ENCODE measurements at regions of chr20 and their contacts with region 1.

Region 1: DNA sequence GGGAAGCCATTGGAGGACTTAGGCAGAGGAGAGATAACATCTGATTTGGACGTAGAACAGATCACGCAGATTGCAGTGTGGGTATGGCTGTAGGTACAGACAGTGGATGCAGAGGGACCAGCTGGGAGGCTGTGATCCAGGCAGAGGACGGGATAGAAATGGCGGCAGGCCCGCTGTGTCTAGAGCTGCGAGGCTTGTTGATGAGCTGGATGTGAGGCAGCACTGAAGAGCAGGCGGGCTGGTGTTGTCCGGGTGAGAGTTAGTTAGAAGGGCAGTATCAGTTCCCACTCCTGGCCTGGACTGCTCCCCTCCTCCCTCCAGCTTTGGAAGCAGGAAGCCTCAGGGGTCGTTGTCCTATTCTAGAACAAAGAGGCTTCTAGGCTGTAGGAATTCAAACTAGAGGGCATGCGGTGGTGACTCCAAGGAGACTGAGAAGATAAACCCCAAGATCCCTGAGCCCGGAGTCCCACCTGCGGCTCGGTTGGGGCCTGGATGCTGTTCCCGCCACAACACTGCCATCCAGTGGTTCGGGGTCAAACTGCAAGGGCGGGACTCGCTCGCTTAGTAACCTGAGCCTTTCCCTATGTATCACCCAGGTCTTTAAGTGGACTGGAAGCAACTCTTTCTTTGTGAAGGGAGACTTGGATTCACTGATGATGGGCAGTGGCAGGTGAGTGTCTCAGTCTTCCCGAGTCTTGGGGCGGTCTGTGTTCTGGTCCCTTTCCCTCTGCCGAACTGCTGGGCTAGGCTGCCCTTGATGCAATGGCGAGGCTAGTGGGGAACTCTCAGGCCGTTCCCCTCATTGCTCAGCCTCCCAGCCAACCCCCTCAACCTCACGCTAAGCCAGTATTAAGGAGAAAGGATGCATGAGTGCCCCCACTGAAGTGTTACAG is 11.2 kb downstream of the TLDC2 start:
- DNase-seq: peak; percentile 73
- H3K4me3 ChIP-seq: no peak overlapping the region
- H3K27ac ChIP-seq: no peak overlapping the region
- H3K4me1 ChIP-seq: no peaks in the 10 kb centered on the region
- H3K27me3 ChIP-seq: no peaks in the 10 kb centered on the region
- CTCF ChIP-seq: peak; percentile 98 to 99

Region 2: GRCh38 chr20:36214684-36215256 is 672.3 kb before region 1 on chr20:
- CTCF ChIA-PET with region 1: no interaction called
- dilution Hi-C with region 1: no loop called
- in situ Hi-C with region 1: no loop called
- intact Hi-C with region 1: loop called (anchors 10 kb)
- DNase-seq: peak; percentile 18
- H3K4me3 ChIP-seq: no peak overlapping the region
- H3K27ac ChIP-seq: no peak overlapping the region
- H3K4me1 ChIP-seq: no peaks in the 10 kb centered on the region
- H3K27me3 ChIP-seq: no peaks in the 10 kb centered on the region
- CTCF ChIP-seq: peak; percentile 72

Region 3: GRCh38 chr20:36235892-36236785 is 651.0 kb before region 1 on chr20 and contains the start of gene AAR2:
- CTCF ChIA-PET with region 1: no interaction called
- dilution Hi-C with region 1: no loop called
- in situ Hi-C with region 1: loop called in 1 of 2 experiments (anchors 25 kb)
- intact Hi-C with region 1: no loop called
- DNase-seq: peak; percentile 76
- H3K4me3 ChIP-seq: peak within 1 kb of the TSS; percentile 76 to 99 (median 89)
- H3K27ac ChIP-seq: peak within 1 kb of the TSS; percentile 83
- H3K4me1 ChIP-seq: peaks cover 12% of the 10 kb centered on the region
- H3K27me3 ChIP-seq: no peaks in the 10 kb centered on the region
- CTCF ChIP-seq: no peak
- total RNA-seq, gene AAR2: 20.9 to 29.3 TPM

Region 4: DNA sequence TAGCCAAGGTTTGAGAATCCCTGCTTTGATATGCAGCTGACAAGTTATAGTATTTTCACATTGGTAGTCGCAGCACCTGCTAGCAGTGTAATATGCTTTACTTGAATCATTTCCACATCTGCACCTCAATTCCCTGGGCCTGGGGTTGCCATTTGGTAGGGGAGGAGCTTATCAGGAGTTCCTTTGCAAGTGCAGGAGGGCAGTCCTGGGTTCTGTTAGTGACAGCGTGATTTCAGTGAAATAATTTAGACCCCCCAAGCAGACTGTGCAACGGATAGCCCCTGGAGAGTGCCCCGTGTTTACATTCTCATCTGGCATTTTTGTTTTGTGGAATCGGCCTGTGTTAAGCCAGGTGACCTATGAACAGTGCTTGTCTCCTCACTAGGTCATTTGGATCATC is 275.5 kb before region 1 on chr20:
- CTCF ChIA-PET with region 1: no interaction called
- dilution Hi-C with region 1: no loop called
- in situ Hi-C with region 1: loop called in 1 of 2 experiments (anchors 25 kb)
- intact Hi-C with region 1: loop called (anchors 1 kb)
- DNase-seq: no peak
- H3K4me3 ChIP-seq: no peak overlapping the region
- H3K27ac ChIP-seq: no peak overlapping the region
- H3K4me1 ChIP-seq: peaks cover 10% of the 10 kb centered on the region
- H3K27me3 ChIP-seq: no peaks in the 10 kb centered on the region
- CTCF ChIP-seq: no peak

Region 5: GRCh38 chr20:36792422-36792821 is 94.7 kb before region 1 on chr20:
- CTCF ChIA-PET with region 1: no interaction called
- dilution Hi-C with region 1: no loop called
- in situ Hi-C with region 1: no loop called
- intact Hi-C with region 1: loop called (anchors 1 kb)
- DNase-seq: peak; percentile 31
- H3K4me3 ChIP-seq: no peak overlapping the region
- H3K27ac ChIP-seq: no peak overlapping the region
- H3K4me1 ChIP-seq: no peaks in the 10 kb centered on the region
- H3K27me3 ChIP-seq: no peaks in the 10 kb centered on the region
- CTCF ChIP-seq: peak; percentile 23 to 53